Activated T-helper 1 cell treated with anti-CD3 and anti-CD28 coated beads, Interleukin-12 subunit alpha, Interleukin-12 subunit beta, Interleukin-2, Interleukin-4 antibody, amounts not matched to agents 30 ng/mL and 10 ng/mL and 1 ng/mL, durations not matched to agents 14 hours and 24 hours and 36 hours (primary cell): ENCODE measurements at regions of chr10 and their contacts with region 1.

Region 1: DNA sequence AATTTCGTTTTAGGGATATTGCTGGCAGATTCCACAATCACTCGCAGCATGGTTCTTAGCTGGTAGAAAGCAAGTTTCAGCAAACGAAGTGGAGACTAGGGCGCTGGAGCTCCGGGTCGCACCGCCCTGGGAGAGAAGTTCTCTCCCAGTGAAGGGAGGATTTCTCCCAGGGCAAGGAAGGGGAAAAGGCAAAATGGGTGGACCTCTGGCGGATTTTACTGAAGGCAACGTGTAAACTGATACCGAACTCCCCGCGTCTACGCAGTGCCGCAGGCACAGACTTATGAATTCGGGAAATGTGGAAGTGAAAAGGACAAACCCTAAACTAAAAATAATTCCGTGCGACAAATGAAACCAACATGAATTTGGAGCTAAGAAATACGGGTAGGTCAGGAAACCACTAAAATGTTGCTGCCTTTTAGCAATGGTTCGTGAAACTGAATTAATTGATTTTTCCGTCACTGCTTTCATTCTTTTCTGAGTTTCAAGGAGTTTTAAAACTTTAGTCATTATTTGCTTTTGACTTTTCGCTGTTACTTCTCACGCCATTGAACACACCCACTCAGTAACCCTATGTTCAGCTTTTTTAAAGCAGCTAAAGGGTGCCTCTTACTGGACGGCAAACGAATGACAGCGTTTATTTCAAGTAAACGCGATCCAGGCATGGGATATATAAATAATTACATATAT is at the start of gene MYOF:
- DNase-seq: peak; percentile 35
- H3K4me3 Mint-ChIP-seq: peak within 1 kb of the TSS; percentile 96
- H3K27ac Mint-ChIP-seq: peak within 1 kb of the TSS; percentile 93
- H3K4me1 Mint-ChIP-seq: peaks cover 19% of the 10 kb centered on the region
- H3K27me3 Mint-ChIP-seq: peaks cover 3% of the 10 kb centered on the region
- total RNA-seq, gene MYOF: 13.4 and 13.7 TPM in 2 replicates

Region 2: GRCh38 chr10:92965314-92965713 is 517.0 kb before region 1 on chr10:
- intact Hi-C with region 1: loop called (anchors 10 kb)
- DNase-seq: no peak
- H3K4me3 Mint-ChIP-seq: no peak overlapping the region
- H3K27ac Mint-ChIP-seq: no peak overlapping the region
- H3K4me1 Mint-ChIP-seq: no peaks in the 10 kb centered on the region
- H3K27me3 Mint-ChIP-seq: no peaks in the 10 kb centered on the region

Region 3: DNA sequence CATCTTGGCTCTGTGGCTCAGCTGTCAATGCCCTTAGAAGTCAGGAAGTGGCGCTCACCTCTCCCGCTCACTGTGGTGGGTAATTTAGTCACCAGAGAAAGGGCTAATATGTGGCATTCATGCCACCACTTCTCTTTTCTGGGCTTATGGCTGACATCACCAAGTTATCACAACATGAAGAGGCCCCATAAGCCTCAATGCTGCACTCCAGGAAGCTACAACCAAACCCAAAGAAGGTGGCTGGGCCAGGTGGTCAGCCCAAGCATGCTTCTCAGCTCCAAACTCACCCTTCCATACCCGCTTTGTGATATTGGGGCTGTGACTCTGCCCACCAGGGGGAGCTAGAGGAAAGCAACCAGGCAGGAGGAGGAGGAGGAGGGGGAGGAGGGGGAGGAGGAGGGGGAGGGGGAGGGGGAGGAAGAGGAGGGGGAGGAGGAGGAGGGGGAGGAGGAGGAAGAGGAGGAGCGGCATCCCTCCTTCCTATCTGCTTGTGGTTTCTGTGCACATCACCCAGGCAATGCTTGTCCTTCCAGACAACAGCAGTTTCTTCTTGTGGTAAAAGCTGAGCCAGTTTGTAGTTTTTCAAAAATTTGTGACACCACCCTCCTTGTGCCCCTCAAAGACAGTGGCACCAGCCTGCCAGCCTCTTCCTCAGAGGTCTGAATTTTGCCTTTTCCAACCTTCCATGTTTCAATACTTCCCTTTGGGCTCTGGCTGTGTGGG is 366.5 kb before region 1 on chr10:
- intact Hi-C with region 1: loop called (anchors 2 kb)
- DNase-seq: peak; percentile 35
- H3K4me3 Mint-ChIP-seq: no peak overlapping the region
- H3K27ac Mint-ChIP-seq: no peak overlapping the region
- H3K4me1 Mint-ChIP-seq: no peaks in the 10 kb centered on the region
- H3K27me3 Mint-ChIP-seq: peaks cover 8% of the 10 kb centered on the region

Region 4: DNA sequence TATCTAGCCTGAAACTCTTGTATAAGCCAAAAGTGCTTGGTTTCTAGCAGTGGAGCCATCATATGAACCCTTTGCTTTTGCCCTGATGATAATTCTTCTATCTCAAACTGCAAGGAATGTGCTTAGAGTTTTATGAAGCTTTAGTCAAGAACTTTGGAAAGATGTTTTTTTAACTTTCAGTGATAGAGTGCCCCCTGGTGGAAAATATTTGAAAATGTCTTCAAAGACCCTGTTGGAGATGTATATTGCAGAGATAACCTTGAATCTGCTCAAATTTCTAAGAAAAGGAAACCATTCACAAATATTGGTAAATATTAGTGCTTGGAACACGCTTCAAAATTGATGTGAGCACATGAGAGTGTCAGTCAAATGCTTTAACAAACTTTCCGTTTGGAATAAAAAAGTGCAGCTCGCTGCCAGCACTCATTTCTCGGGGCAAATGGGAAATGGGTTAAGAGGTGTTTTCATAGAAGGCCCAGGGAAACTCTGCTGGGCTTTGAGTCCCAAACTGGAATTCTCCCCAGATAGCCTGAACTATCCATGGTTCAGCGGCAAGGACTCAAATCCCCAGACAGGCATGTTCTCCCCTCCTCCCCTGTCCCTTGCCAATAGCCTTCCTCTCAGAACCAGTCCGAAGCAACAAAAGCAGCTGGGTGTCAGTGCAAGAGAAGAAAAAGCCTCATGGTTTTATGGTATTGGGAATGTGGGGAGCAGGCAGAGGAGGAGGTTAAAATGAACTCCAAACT is 129.5 kb before region 1 on chr10:
- intact Hi-C with region 1: loop called (anchors 1 kb)
- DNase-seq: no peak
- H3K4me3 Mint-ChIP-seq: no peak overlapping the region
- H3K27ac Mint-ChIP-seq: no peak overlapping the region
- H3K4me1 Mint-ChIP-seq: peaks cover 3% of the 10 kb centered on the region
- H3K27me3 Mint-ChIP-seq: peaks cover 2% of the 10 kb centered on the region

Region 5: GRCh38 chr10:93515071-93516005 is 33.0 kb after region 1 on chr10:
- intact Hi-C with region 1: loop called (anchors 1 kb)
- DNase-seq: no peak
- H3K4me3 Mint-ChIP-seq: no peak overlapping the region
- H3K27ac Mint-ChIP-seq: no peak overlapping the region
- H3K4me1 Mint-ChIP-seq: peaks cover 4% of the 10 kb centered on the region
- H3K27me3 Mint-ChIP-seq: no peaks in the 10 kb centered on the region